Natural killer cell (primary cell): ENCODE measurements at regions of chr21 and their contacts with region 1.

Region 1: DNA sequence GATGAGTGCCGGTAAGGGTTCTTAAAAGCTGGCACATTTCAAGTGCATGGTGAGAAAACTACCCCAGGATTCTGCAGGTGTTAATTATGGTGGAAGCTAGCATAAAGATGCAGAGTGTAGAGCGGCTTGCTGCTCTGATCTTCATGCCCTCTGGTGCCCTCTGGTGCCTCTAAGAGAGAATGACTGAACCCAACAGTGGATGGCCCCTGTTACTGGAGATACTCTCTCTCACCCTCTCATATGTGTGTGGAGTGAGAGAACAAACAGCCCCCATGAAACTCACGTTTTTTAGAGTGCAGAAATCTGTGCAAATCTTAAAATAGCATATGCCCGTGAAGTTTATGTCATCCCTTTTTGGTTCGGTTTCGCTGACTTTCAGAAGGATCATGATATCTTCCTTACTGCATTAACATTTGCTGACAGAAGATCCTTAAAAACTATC is 90.0 kb downstream of the GRIK1 start:
- DNase-seq: peak in 1 of 2 donors; percentile 64
- ATAC-seq: peak; percentile 54 to 74 (median 54)
- H3K4me3 ChIP-seq: no peak overlapping the region
- H3K4me3 Mint-ChIP-seq: no peak overlapping the region
- H3K27ac ChIP-seq: no peak overlapping the region
- H3K27ac Mint-ChIP-seq: no peak overlapping the region
- H3K4me1 ChIP-seq: no peaks in the 10 kb centered on the region
- H3K4me1 Mint-ChIP-seq: no peaks in the 10 kb centered on the region
- H3K27me3 ChIP-seq: no peaks in the 10 kb centered on the region
- H3K27me3 Mint-ChIP-seq: no peaks in the 10 kb centered on the region
- CTCF ChIP-seq: peak; percentile 33

Region 2: DNA sequence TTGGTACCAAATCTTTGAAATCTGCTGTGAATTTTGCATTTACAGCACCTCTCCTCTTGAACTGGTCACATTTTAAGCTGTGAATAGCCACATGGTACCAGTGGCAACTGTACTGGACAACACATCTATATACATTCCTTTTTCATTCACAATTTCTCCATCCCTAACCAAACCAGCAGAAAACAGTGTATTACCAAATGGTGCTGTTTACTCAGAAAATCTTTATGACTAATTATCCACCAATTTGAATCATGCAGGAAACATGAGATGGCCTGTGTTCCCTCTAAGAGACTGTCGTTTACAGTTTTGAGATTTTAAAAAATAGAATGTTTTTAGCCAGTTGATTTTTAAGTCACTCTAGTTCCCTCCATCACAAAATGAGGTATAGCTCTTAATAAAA is 758.7 kb before region 1 on chr21:
- intact Hi-C with region 1: loop called (anchors 5 kb)
- DNase-seq: no peak
- ATAC-seq: no peak
- H3K4me3 ChIP-seq: no peak overlapping the region
- H3K4me3 Mint-ChIP-seq: no peak overlapping the region
- H3K27ac ChIP-seq: no peak overlapping the region
- H3K27ac Mint-ChIP-seq: no peak overlapping the region
- H3K4me1 ChIP-seq: no peaks in the 10 kb centered on the region
- H3K4me1 Mint-ChIP-seq: no peaks in the 10 kb centered on the region
- H3K27me3 ChIP-seq: no peaks in the 10 kb centered on the region
- H3K27me3 Mint-ChIP-seq: no peaks in the 10 kb centered on the region
- CTCF ChIP-seq: no peak

Region 3: DNA sequence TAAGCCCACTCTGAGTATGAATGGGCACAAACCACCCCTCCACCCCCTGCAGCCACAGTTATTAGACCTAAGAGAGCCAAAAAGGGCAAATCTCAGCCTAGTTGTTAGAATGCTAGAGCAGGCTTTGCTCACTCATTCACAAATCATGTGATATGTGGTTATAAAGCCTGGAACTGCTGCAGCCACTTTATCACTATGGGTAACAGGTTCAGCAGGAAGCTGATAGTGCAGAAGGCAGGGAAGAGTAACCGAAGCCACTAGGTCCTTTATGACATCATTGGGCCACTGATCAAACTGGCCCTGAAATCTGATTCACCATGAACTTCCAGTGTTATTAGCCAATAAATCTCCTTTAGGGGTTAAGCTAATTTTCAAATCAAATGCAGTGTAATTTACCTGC is 44.7 kb before region 1 on chr21:
- intact Hi-C with region 1: no loop called
- DNase-seq: no peak
- ATAC-seq: no peak
- H3K4me3 ChIP-seq: no peak overlapping the region
- H3K4me3 Mint-ChIP-seq: no peak overlapping the region
- H3K27ac ChIP-seq: no peak overlapping the region
- H3K27ac Mint-ChIP-seq: no peak overlapping the region
- H3K4me1 ChIP-seq: no peaks in the 10 kb centered on the region
- H3K4me1 Mint-ChIP-seq: no peaks in the 10 kb centered on the region
- H3K27me3 ChIP-seq: no peaks in the 10 kb centered on the region
- H3K27me3 Mint-ChIP-seq: no peaks in the 10 kb centered on the region
- CTCF ChIP-seq: no peak

Region 4: DNA sequence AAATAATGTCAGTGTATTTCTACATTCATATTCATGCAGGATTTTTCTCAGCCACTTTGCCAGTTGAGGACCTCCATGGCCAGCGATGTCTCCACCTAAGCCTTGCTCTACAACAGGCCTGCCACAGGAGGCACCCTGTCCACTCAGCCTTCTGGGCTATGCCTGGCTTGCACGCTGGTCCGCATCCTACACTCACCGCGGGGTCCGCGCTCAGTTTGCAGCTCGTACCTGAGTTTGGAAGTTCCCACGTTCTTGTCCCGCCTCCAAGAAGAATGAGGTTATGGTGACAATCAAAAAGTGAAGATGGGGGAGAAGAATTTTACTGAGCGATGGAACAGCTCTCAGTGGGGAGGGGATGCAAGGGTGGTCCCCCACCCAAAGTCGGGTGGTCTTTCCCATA is 183.7 kb after region 1 on chr21:
- intact Hi-C with region 1: no loop called
- DNase-seq: no peak
- ATAC-seq: no peak
- H3K4me3 ChIP-seq: no peak overlapping the region
- H3K4me3 Mint-ChIP-seq: no peak overlapping the region
- H3K27ac ChIP-seq: no peak overlapping the region
- H3K27ac Mint-ChIP-seq: no peak overlapping the region
- H3K4me1 ChIP-seq: no peaks in the 10 kb centered on the region
- H3K4me1 Mint-ChIP-seq: no peaks in the 10 kb centered on the region
- H3K27me3 ChIP-seq: no peaks in the 10 kb centered on the region
- H3K27me3 Mint-ChIP-seq: no peaks in the 10 kb centered on the region
- CTCF ChIP-seq: no peak